ENCODE measurements at regions of chr7 and their contacts with region 1.

Region 1: DNA sequence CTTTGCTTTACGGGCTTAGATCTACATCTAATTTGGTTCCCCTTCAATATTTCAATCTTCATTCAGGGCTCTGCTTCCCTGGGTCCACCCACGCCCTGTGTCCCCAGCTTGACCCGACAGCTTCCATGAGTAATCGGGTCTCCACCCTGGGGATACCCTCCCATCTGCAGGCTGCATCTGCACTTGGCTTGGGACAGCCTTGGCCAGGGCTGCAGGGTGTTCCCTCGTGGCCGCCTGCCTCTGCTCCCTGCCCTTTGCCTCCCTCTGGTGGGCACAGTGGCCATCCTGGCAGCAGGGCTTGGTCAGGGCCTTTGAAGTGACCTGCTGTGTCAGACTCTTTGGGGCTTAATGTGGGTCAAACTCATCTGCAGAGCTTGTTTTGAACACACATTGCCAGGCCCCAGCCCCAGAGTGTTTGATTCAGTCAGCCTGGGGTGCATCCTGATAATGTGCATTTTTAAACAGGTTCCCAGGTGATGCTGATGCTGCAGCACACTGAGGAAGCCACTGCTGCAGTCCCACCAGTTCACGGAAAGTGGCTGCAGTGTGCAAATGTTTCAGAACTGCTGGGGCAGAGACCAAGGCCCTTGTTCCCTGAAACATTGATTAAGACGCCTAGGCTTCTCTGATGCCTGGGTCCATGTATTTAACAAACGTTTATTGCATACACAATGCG is 80.7 kb upstream of the SEC61G start:
- DNase-seq: peak; percentile 78
- ATAC-seq: peak; percentile 74
- H3K4me3 ChIP-seq: no peak overlapping the region
- H3K27ac ChIP-seq: peak overlapping the region; percentile 96
- H3K4me1 ChIP-seq: peaks cover 69% of the 10 kb centered on the region
- H3K27me3 ChIP-seq: no peaks in the 10 kb centered on the region
- CTCF ChIP-seq: peak; percentile 90

Region 2: GRCh38 chr7:54773472-54774399 is 65.9 kb before region 1 on chr7:
- CTCF ChIA-PET with region 1: interaction called, 10 read pairs
- POLR2A ChIA-PET with region 1: no interaction called
- intact Hi-C with region 1: loop called (anchors 1 kb)
- DNase-seq: peak; percentile 94
- ATAC-seq: peak; percentile 88
- H3K4me3 ChIP-seq: peak overlapping the region; percentile 67
- H3K27ac ChIP-seq: peak overlapping the region; percentile 54
- H3K4me1 ChIP-seq: peaks cover 21% of the 10 kb centered on the region
- H3K27me3 ChIP-seq: no peaks in the 10 kb centered on the region
- CTCF ChIP-seq: peak; percentile 86

Region 3: DNA sequence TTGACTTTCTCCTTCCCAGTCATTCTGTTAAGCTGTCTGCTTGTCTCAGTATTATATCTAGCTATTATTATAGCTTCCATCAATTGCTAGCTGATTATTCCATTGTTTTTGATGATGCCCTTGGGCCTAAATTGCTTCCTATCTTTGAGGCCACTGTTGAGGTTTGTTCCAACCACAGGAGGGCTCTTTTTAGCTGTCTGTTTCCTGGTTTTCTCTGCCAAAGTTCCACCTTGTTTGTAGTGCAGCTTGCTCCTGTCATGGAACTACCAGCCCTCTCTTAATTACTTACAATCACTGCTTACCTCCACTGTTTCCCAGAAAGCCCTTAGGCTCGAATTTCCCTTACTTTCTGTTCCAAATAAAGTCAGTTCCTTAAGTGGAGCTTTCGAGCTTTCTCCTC is 38.0 kb after region 1 on chr7:
- CTCF ChIA-PET with region 1: no interaction called
- POLR2A ChIA-PET with region 1: no interaction called
- intact Hi-C with region 1: loop called (anchors 2 kb)
- DNase-seq: peak; percentile 54
- ATAC-seq: peak; percentile 35
- H3K4me3 ChIP-seq: no peak overlapping the region
- H3K27ac ChIP-seq: no peak overlapping the region
- H3K4me1 ChIP-seq: peaks cover 30% of the 10 kb centered on the region
- H3K27me3 ChIP-seq: no peaks in the 10 kb centered on the region
- CTCF ChIP-seq: peak; percentile 56

Region 4: GRCh38 chr7:54955696-54956420 is 116.2 kb after region 1 on chr7:
- CTCF ChIA-PET with region 1: no interaction called
- POLR2A ChIA-PET with region 1: no interaction called
- intact Hi-C with region 1: no loop called
- DNase-seq: no peak
- ATAC-seq: no peak
- H3K4me3 ChIP-seq: no peak overlapping the region
- H3K27ac ChIP-seq: no peak overlapping the region
- H3K4me1 ChIP-seq: peaks cover 9% of the 10 kb centered on the region
- H3K27me3 ChIP-seq: no peaks in the 10 kb centered on the region
- CTCF ChIP-seq: no peak

Region 5: GRCh38 chr7:55018361-55019190 is 178.9 kb after region 1 on chr7 and contains the start of gene EGFR:
- CTCF ChIA-PET with region 1: no interaction called
- POLR2A ChIA-PET with region 1: no interaction called
- intact Hi-C with region 1: loop called (anchors 2 kb)
- DNase-seq: peak; percentile 76
- ATAC-seq: peak; percentile 80
- H3K4me3 ChIP-seq: peak within 1 kb of the TSS; percentile 90
- H3K27ac ChIP-seq: peak within 1 kb of the TSS; percentile 69
- H3K4me1 ChIP-seq: peaks cover 27% of the 10 kb centered on the region
- H3K27me3 ChIP-seq: no peaks in the 10 kb centered on the region
- CTCF ChIP-seq: no peak
- total RNA-seq, gene EGFR: 50.0 and 64.6 TPM in 2 replicates

Region 6: DNA sequence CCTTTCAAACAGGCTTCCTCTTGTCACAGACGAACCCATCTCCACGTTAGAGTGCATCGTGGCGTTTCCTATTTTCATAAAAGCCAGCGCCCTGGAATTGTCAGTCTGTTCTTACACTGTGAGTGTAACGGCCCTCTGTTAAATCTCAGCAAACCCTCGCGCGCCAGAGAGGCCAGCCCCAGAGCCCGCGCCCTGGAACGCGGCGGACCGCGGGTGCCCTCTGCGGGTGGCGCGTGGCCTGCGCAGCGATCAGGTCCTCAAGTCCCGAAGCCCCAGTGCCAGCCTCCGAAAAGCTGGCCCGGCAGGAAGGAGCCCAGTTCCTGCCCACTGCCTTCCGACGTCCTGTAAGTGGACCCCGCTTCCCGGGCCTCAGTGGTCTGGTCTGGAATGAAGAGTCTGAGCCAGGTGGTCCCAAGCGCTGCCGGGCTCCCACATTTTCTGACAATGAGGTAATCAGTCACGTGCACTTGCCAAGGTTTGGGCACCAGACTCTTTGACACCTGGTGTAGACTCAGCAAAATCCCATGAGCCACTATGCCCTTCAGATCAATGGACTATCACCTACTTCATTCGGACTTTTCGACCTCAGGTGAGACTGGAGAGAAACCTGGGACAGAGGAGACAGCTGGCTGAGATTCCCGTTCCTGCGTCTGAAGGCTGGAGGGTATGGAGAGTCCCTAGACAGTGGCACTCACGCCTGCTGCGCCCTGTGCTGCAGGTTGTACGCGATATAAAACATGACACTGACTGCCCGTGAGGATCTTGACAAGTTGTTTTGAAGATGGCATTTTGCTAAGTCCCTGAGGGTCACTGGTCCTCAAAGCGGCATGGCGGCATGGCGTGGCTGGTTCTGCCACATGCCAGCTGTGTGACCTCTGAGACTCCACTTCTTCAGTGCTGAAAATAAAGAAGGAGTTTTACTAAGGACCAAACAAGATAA is 416.1 kb after region 1 on chr7:
- CTCF ChIA-PET with region 1: interaction called, 9 read pairs
- POLR2A ChIA-PET with region 1: interaction called, 3 read pairs
- intact Hi-C with region 1: loop called (anchors 1 kb)
- DNase-seq: peak; percentile 85
- ATAC-seq: peak; percentile 84
- H3K4me3 ChIP-seq: peak overlapping the region; percentile 72
- H3K27ac ChIP-seq: peak overlapping the region; percentile 47
- H3K4me1 ChIP-seq: peaks cover 9% of the 10 kb centered on the region; the same call in 1 of the 2 replicates
- H3K27me3 ChIP-seq: no peaks in the 10 kb centered on the region
- CTCF ChIP-seq: peak; percentile 90